ENCODE measurements at regions of chr18 and their contacts with region 1.

Region 1: DNA sequence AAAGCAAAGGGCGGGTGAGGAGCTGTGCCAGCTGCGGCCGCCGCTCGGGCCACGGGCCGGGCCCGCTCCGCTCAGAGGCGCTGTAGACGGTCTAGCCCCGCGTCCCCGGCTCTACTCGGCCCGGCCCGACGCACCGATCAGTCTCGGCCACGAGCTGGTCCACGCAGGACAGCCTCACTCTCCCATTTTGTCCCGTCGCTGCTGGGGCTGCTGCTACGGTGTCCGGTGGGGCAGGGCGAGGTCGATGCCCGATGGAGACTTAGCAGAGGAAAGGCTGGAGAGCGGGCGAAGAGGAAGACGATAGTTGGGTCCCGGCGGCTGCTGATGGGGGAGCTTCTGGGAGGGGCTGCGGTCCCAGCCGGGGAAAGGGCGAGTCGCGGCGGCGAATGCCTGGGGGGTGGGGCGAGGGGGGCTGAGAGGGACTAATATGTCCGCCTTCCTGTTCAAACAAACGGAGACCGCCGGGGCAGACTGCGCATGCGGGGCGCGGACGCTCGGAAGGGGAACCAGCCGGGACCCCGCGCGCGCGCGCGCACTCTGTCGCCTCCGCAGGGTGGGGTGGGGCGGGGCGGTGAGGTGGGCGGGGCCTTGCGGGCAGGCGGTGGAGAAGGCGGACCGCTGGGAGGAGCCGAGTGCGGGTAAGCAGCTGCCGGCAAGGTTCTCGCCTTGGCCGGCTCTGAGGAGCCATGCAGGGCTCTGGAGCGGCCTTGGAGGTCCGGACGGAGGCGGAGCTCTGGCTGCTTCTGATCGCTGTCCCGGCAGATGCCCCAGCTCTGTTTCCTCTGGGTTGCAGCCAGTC is at the start of gene ROCK1:
- DNase-seq: peak; percentile 91 to 96 (median 94)
- H3K4me3 ChIP-seq: peak within 1 kb of the TSS; percentile 60 to 100 (median 96)
- H3K27ac ChIP-seq: peak within 1 kb of the TSS; percentile 61 to 98 (median 94)
- H3K27me3 ChIP-seq: no peaks in the 10 kb centered on the region
- CTCF ChIP-seq: peak in 22 of 56 donors; percentile 6 to 38 (median 26)
- total RNA-seq, gene ROCK1: 22.3 to 53.5 (median 37.7) TPM

Region 2: DNA sequence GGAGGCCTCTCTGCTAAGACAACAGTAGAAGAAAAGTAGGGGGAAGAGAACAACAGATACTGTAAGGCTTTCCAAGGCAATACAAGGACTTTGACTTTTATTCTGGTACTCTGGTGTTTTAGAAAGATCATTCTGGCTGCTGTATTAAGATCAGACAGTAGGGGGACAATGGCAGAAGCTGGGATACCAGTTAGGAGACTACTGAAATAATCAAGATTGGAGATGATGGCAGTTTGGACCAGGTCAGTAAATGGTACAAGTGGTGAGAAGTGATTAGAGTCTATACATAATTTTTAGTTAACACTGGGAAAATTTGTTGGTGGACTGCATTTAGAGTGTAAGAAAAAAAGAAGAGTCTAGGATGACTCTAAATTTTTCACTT is 139.7 kb before region 1 on chr18:
- intact Hi-C with region 1: loop called in 1 of 2 experiments (anchors 10 kb)
- DNase-seq: no peak
- H3K4me3 ChIP-seq: no peak overlapping the region
- H3K27ac ChIP-seq: no peak overlapping the region
- H3K27me3 ChIP-seq: no peaks in the 10 kb centered on the region
- CTCF ChIP-seq: peak in 22 of 56 donors; percentile 6 to 37 (median 17)

Region 3: GRCh38 chr18:21031845-21032244 is 79.7 kb before region 1 on chr18:
- intact Hi-C with region 1: loop called in 1 of 2 experiments (anchors 10 kb)
- DNase-seq: no peak
- H3K4me3 ChIP-seq: no peak overlapping the region
- H3K27ac ChIP-seq: no peak overlapping the region
- H3K27me3 ChIP-seq: no peaks in the 10 kb centered on the region
- CTCF ChIP-seq: no peak

Region 4: DNA sequence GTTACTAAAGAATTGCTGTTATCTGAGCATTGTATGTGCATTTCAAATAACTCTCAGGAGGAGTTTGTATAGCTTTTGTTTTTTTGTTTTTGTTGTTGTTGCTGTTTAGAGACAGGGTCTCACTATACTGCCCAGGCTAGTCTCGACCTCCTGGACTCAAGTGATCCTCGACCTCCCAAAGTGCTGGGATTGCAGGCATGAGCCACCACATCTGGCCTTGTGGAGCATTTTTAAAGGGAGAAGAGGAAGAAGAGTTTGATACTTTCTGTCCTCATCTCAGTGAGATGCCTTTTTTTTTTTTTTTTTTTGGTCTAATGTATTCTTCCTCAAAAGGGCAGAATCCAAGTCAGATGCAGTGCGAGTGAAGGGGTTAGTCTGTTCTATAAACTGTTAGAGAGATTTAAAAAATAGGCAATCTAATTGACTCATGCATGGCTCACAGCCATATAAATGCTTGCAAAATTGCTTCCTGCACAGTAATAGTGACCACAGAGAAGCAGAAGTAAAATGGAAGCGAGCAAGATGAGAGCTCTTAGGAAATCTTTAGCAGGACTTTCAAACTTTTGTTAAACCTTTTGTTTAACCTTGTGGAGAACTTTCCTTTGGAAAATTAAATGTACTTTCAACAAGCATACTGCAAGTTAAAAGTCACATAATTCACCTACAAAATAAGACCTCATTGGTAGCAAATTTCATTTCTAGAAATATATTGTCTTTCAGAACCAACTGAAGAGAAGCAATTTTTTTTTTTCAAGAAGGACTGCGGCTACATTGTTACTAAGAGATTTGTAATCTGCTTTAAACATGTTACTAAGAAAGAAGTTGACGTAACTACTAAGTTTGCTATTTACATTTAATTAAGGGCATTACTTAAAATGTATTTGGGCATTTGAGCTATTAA is 52.4 kb after region 1 on chr18:
- intact Hi-C with region 1: loop called in 1 of 2 experiments (anchors 10 kb)
- DNase-seq: no peak
- H3K4me3 ChIP-seq: no peak overlapping the region
- H3K27ac ChIP-seq: peak overlapping the region in 7 of 59 donors; percentile 2 to 48 (median 24)
- H3K27me3 ChIP-seq: no peaks in the 10 kb centered on the region
- CTCF ChIP-seq: no peak

Region 5: GRCh38 chr18:21315741-21316187 is 204.2 kb after region 1 on chr18:
- intact Hi-C with region 1: no loop called
- DNase-seq: no peak
- H3K4me3 ChIP-seq: no peak overlapping the region
- H3K27ac ChIP-seq: no peak overlapping the region
- H3K27me3 ChIP-seq: no peaks in the 10 kb centered on the region
- CTCF ChIP-seq: no peak

Region 6: DNA sequence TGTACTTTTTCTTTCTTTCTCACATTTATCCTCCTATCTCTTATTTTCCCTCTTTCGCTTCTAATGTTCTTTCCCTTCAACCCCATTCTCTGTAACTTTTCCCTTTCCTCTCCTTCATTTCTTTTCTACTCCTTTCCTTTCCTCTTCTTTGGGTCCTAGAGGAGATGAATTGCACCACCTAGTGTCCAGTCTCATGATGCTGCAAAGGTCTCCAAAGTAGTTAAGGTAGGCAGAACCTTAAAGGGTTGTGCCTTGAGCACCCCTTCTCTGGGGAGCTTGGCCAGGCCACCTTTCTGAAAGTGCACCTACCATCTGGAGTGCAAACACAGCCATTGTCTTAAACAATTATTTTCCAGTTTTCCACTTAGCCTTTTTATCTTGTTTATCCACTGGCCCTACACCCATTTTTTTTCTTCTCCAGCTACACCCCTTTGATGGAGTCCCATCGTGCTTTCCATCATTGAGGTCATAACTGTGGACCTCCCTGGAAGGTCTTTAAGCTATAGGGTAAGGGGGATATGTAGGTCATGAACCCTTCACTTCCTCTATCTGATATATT is 333.0 kb after region 1 on chr18:
- intact Hi-C with region 1: loop called in 1 of 2 experiments (anchors 10 kb)
- DNase-seq: peak in 2 of 10 donors; percentile 28 to 33
- H3K4me3 ChIP-seq: no peak overlapping the region
- H3K27ac ChIP-seq: no peak overlapping the region
- H3K27me3 ChIP-seq: peaks cover 0 to 5% (median 0%) of the 10 kb centered on the region in 45 donors
- CTCF ChIP-seq: peak; percentile 35 to 88 (median 71)